Natural killer cell (primary cell): ENCODE measurements at regions of chr12 and their contacts with region 1.

Region 1: DNA sequence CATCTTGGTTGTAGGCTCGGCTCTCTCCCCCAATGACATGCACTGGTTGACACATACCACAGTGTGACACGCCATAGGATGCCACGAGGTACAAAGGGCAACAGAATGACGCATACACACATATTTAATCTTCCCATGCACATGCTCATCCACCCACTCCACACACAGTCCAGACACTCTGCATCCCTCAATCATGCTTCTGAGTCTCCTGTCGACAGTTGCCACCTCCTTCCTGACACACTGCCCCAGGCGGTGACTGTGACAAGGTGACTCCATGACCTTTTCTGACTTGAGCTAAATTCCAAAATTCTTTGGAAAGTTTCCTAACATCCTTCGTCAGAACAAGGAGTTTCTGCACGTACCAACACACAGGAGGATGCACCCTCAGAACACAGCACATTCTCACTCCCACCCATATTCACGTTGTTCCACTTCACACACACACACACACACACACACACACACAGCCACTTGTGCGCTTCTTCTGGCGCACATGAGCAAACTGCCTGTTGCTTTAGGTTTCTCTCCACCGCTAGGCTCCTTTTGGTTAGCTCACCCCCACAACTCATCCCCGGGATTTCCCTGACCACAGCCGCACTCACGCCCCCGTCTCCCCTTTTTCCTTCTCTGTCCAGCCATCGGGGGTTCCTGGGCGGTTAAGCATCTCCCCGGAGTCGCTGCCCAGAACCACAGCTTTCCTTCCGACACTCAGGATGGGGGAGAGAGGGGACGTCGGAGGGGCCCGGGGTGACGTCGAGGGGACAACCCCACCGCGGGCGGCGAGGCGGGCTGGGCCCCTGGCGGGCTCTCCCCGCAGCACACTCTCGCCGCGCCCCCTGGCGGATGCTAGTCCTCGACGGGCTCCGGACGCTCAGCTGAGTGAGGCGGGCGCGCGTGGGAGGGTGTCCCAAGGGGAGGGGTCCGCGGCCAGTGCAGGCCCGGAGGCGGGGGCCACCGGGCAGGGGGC is 524 bp upstream of the WNT1 start:
- DNase-seq: peak; percentile 87 to 92
- ATAC-seq: peak; percentile 59 to 75 (median 68)
- H3K4me3 ChIP-seq: no peak overlapping the region
- H3K4me3 Mint-ChIP-seq: peak overlapping the region; percentile 64
- H3K27ac ChIP-seq: no peak overlapping the region
- H3K27ac Mint-ChIP-seq: peak overlapping the region; percentile 49 to 94
- H3K4me1 ChIP-seq: peaks cover 61% of the 10 kb centered on the region
- H3K4me1 Mint-ChIP-seq: peaks cover 56 to 63% of the 10 kb centered on the region in 2 donors
- H3K27me3 ChIP-seq: peaks cover 33% of the 10 kb centered on the region
- H3K27me3 Mint-ChIP-seq: peaks cover 20 to 38% of the 10 kb centered on the region in 2 donors
- CTCF ChIP-seq: peak; percentile 98

Region 2: GRCh38 chr12:48765753-48766162 is 211.8 kb before region 1 on chr12:
- intact Hi-C with region 1: no loop called
- DNase-seq: no peak
- ATAC-seq: peak; percentile 74 to 95 (median 87)
- H3K4me3 ChIP-seq: no peak overlapping the region
- H3K4me3 Mint-ChIP-seq: peak overlapping the region; percentile 80
- H3K27ac ChIP-seq: peak overlapping the region; percentile 14
- H3K27ac Mint-ChIP-seq: peak overlapping the region; percentile 62 to 81
- H3K4me1 ChIP-seq: peaks cover 26% of the 10 kb centered on the region
- H3K4me1 Mint-ChIP-seq: peaks cover 21 to 32% of the 10 kb centered on the region in 2 donors
- H3K27me3 ChIP-seq: no peaks in the 10 kb centered on the region
- H3K27me3 Mint-ChIP-seq: no peaks in the 10 kb centered on the region
- CTCF ChIP-seq: no peak

Region 3: GRCh38 chr12:48882315-48882687 is 95.3 kb before region 1 on chr12:
- intact Hi-C with region 1: no loop called
- DNase-seq: no peak
- ATAC-seq: no peak
- H3K4me3 ChIP-seq: no peak overlapping the region
- H3K4me3 Mint-ChIP-seq: no peak overlapping the region
- H3K27ac ChIP-seq: no peak overlapping the region
- H3K27ac Mint-ChIP-seq: no peak overlapping the region
- H3K4me1 ChIP-seq: no peaks in the 10 kb centered on the region
- H3K4me1 Mint-ChIP-seq: peaks cover 4 to 8% of the 10 kb centered on the region in 2 donors
- H3K27me3 ChIP-seq: peaks cover 7% of the 10 kb centered on the region
- H3K27me3 Mint-ChIP-seq: peaks cover 21 to 26% of the 10 kb centered on the region in 2 donors
- CTCF ChIP-seq: no peak

Region 4: GRCh38 chr12:48924617-48925303 is 52.8 kb before region 1 on chr12:
- intact Hi-C with region 1: loop called (anchors 10 kb)
- DNase-seq: peak; percentile 64 to 89
- ATAC-seq: peak; percentile 59 to 77 (median 67)
- H3K4me3 ChIP-seq: peak overlapping the region; percentile 92
- H3K4me3 Mint-ChIP-seq: peak overlapping the region; percentile 96
- H3K27ac ChIP-seq: peak overlapping the region; percentile 93
- H3K27ac Mint-ChIP-seq: peak overlapping the region; percentile 87 to 94
- H3K4me1 ChIP-seq: peaks cover 28% of the 10 kb centered on the region
- H3K4me1 Mint-ChIP-seq: peaks cover 57 to 60% of the 10 kb centered on the region in 2 donors
- H3K27me3 ChIP-seq: no peaks in the 10 kb centered on the region
- H3K27me3 Mint-ChIP-seq: no peaks in the 10 kb centered on the region
- CTCF ChIP-seq: peak; percentile 69

Region 5: GRCh38 chr12:48988030-48988649 is 10.5 kb after region 1 on chr12:
- intact Hi-C with region 1: loop called (anchors 1 kb)
- DNase-seq: peak; percentile 77 to 86
- ATAC-seq: peak; percentile 86 to 97 (median 90)
- H3K4me3 ChIP-seq: no peak overlapping the region
- H3K4me3 Mint-ChIP-seq: no peak overlapping the region
- H3K27ac ChIP-seq: no peak overlapping the region
- H3K27ac Mint-ChIP-seq: no peak overlapping the region
- H3K4me1 ChIP-seq: peaks cover 5% of the 10 kb centered on the region
- H3K4me1 Mint-ChIP-seq: peaks cover 5 to 8% of the 10 kb centered on the region in 2 donors
- H3K27me3 ChIP-seq: peaks cover 7% of the 10 kb centered on the region
- H3K27me3 Mint-ChIP-seq: peaks cover 35% of the 10 kb centered on the region in 2 donors
- CTCF ChIP-seq: peak; percentile 87

Region 6: GRCh38 chr12:49018261-49019119 is 40.9 kb after region 1 on chr12 and contains the start of gene PRKAG1:
- intact Hi-C with region 1: loop called (anchors 2 kb)
- DNase-seq: peak; percentile 97 to 98
- ATAC-seq: peak; percentile 81 to 94 (median 86)
- H3K4me3 ChIP-seq: peak within 1 kb of the TSS; percentile 71
- H3K4me3 Mint-ChIP-seq: peak within 1 kb of the TSS; percentile 92
- H3K27ac ChIP-seq: peak within 1 kb of the TSS; percentile 92
- H3K27ac Mint-ChIP-seq: peak within 1 kb of the TSS; percentile 97 to 98
- H3K4me1 ChIP-seq: peaks cover 24% of the 10 kb centered on the region
- H3K4me1 Mint-ChIP-seq: peaks cover 23 to 55% of the 10 kb centered on the region in 2 donors
- H3K27me3 ChIP-seq: no peaks in the 10 kb centered on the region
- H3K27me3 Mint-ChIP-seq: no peaks in the 10 kb centered on the region
- CTCF ChIP-seq: peak; percentile 56
- total RNA-seq, gene PRKAG1: 76.4 to 100 (median 81.1) TPM